Right ventricle myocardium inferior (tissue), 1 donor: ENCODE measurements at regions of chr18 and their contacts with region 1.

Region 1: DNA sequence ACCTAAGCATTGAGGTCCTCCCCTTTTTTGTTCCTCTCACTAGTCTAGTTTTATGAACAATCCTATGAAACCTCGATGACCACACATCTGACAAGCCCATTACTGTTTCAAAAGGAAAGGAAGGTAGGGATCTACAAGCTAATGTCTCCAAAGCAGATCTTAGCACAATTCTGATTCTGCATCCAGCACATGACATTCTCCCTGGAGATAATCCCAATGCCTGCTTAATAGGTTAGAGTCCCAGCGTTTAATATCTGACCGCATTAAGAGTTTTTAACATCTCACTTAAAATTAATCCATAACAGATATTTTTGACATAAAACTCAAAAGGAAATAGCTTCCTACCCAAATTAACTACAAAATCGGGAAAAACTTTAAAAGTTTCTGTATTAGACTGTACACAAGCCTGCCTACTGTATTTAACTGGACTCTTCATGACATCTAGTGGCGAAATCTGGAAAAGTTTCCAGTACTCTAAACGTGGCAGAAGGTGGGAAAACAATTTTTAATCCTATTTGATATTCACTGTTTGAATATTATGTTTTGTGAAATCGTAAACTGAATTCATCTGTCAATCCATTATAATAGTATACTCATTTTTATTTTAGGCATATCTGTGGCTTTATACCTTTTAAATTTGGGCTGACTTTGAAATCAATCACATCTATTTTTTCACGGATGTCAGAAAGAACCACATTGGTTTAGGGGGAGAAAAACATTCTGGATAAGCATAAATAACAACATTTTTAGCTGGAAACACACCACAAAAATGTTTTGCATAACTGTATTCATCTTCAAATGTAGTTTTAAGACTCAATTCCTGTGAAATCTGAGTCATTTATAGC is 62.4 kb downstream of the TXNL1 start:
- DNase-seq: no peak
- ATAC-seq: peak; percentile 82

Region 2: GRCh38 chr18:55234366-55235093 is 1341.5 kb before region 1 on chr18:
- intact Hi-C with region 1: loop called (anchors 5 kb)
- DNase-seq: peak; percentile 69
- ATAC-seq: peak; percentile 92

Region 3: GRCh38 chr18:55343396-55344073 is 1232.5 kb before region 1 on chr18:
- intact Hi-C with region 1: loop called (anchors 5 kb)
- DNase-seq: no peak
- ATAC-seq: peak; percentile 44

Region 4: DNA sequence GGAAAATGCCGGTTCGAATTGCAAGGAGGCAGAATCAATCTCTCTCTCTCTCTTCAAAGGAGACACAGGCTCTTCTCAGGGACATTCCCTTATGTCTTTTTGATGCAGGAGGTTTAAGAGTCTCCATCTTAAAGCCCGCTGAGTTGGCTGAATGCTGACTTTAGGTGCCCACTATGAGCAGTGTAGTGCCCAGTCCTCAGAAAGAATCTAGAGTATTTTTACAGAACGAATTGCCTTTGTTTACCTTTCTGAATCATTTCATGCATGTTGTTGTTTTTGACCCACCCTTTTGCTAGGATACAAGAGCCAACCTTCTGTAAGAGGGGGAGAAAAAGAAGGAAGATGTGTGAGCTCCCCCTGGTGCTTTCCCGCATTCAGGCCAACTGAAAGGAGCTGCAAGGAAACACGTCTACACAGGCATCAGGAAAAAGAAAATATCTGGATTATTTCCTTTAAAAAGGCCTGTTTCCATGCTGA is 794.5 kb before region 1 on chr18:
- intact Hi-C with region 1: loop called (anchors 5 kb)
- DNase-seq: peak; percentile 50
- ATAC-seq: peak; percentile 57

Region 5: GRCh38 chr18:56374007-56374655 is 201.9 kb before region 1 on chr18:
- intact Hi-C with region 1: loop called (anchors 10 kb)
- DNase-seq: no peak
- ATAC-seq: no peak